ENCODE measurements at regions of chr6 and their contacts with region 1.

Region 1: DNA sequence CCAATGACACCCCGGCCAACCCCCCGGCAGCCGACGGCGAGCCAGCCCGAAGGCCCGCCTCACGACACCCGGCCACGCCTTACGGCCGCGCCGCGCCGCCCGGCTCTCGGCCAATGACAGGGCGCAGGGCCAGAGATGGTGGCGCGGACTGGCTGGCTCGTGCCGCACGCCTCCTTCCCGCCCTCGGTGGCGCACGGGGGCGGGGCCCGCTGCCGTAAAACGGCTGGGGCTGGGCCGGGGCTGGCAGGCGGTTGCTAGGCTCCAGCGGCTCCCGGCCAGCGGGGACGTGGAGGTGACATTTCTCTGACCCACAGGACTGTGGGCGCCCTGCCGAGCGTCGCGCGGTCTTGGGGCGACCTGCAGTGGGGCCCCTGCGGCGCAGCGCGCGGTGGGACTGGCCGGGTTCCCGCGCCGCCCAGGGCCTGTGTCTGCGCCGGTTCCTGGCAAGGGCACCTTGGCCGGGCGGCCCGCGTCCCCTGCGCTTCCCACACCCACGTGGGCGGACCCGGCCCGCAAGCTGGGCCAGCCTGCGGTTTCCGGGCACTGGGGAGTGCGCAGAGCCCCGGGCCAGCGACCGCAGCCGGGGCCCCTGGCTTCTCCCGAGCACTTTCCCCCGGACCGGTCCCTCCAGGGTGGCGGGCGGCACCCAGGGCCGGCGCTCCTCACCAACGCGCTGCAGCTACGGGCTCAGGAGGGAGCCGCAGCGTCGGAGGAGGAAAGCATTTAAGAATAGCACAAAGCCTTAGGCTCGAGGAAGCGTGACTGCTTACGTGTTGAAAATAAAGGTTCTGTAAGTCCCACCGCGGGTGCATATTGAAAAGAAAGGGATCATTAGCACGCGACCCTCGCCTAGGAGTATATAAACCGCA is at the start of gene MPC1:
- DNase-seq: peak; percentile 93 to 95 (median 94)
- H3K4me3 ChIP-seq: peak within 1 kb of the TSS; percentile 63 to 75
- H3K4me3 Mint-ChIP-seq: peak within 1 kb of the TSS; percentile 89 to 96 (median 93)
- H3K27ac ChIP-seq: peak within 1 kb of the TSS; percentile 77
- H3K27ac Mint-ChIP-seq: peak within 1 kb of the TSS; percentile 92 to 97 (median 93)
- H3K4me1 ChIP-seq: peaks cover 6% of the 10 kb centered on the region
- H3K4me1 Mint-ChIP-seq: peaks cover 5 to 22% (median 7%) of the 10 kb centered on the region in 4 donors
- H3K27me3 ChIP-seq: no peaks in the 10 kb centered on the region
- H3K27me3 Mint-ChIP-seq: no peaks in the 10 kb centered on the region
- total RNA-seq, gene MPC1: 33.1 to 34.7 TPM

Region 2: DNA sequence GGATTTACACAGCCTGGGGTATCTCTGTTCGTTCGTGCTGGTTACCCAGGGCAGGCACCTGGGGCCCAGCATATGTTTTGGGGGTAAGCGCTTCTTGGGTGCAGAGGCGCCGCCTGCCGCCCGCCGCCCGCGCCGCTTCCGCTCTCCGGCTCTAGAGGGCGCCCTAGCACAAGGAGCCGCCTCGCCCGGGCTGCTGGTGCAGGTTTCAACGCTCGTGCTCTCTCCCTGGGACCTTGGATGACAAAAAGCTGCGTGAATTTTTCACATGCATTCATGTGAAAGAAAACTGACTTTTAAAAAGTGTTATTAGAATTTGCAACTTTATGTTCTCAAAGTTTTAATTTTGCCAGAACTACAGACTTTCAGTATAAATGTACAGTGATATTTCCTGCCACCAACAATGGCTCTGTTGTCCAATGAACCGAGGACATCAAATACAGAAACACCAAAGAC is 107.4 kb before region 1 on chr6:
- CTCF ChIA-PET with region 1: interaction called, 7 read pairs
- POLR2A ChIA-PET with region 1: no interaction called
- intact Hi-C with region 1: loop called (anchors 1 kb)
- DNase-seq: peak; percentile 57 to 84 (median 77)
- H3K4me3 ChIP-seq: no peak overlapping the region
- H3K4me3 Mint-ChIP-seq: no peak overlapping the region
- H3K27ac ChIP-seq: no peak overlapping the region
- H3K27ac Mint-ChIP-seq: peak overlapping the region in 1 of 7 donors; percentile 66
- H3K4me1 ChIP-seq: peaks cover 4% of the 10 kb centered on the region
- H3K4me1 Mint-ChIP-seq: peaks cover 0 to 8% (median 6%) of the 10 kb centered on the region in 4 donors
- H3K27me3 ChIP-seq: no peaks in the 10 kb centered on the region
- H3K27me3 Mint-ChIP-seq: peaks cover 0 to 3% of the 10 kb centered on the region in 2 donors

Region 3: GRCh38 chr6:166335378-166336302 is 47.5 kb before region 1 on chr6:
- CTCF ChIA-PET with region 1: interaction called, 13 read pairs
- POLR2A ChIA-PET with region 1: interaction called, 3 read pairs
- intact Hi-C with region 1: no loop called
- DNase-seq: no peak
- H3K4me3 ChIP-seq: no peak overlapping the region
- H3K4me3 Mint-ChIP-seq: peak overlapping the region in 3 of 8 donors; percentile 17 to 68 (median 18)
- H3K27ac ChIP-seq: no peak overlapping the region
- H3K27ac Mint-ChIP-seq: peak overlapping the region in 4 of 7 donors; percentile 11 to 53 (median 36)
- H3K4me1 ChIP-seq: peaks cover 93% of the 10 kb centered on the region
- H3K4me1 Mint-ChIP-seq: peaks cover 0 to 48% (median 41%) of the 10 kb centered on the region in 4 donors
- H3K27me3 ChIP-seq: no peaks in the 10 kb centered on the region
- H3K27me3 Mint-ChIP-seq: no peaks in the 10 kb centered on the region

Region 4: GRCh38 chr6:166419286-166419685 is 36.1 kb after region 1 on chr6:
- CTCF ChIA-PET with region 1: interaction called, 6 read pairs
- POLR2A ChIA-PET with region 1: interaction called, 9 read pairs
- intact Hi-C with region 1: loop called (anchors 1 kb)
- DNase-seq: peak; percentile 45 to 82 (median 53)
- H3K4me3 ChIP-seq: no peak overlapping the region
- H3K4me3 Mint-ChIP-seq: peak overlapping the region in 7 of 8 donors; percentile 55 to 79 (median 70)
- H3K27ac ChIP-seq: peak overlapping the region; percentile 42
- H3K27ac Mint-ChIP-seq: peak overlapping the region; percentile 96 to 99 (median 98)
- H3K4me1 ChIP-seq: peaks cover 74% of the 10 kb centered on the region
- H3K4me1 Mint-ChIP-seq: peaks cover 55 to 74% (median 68%) of the 10 kb centered on the region in 4 donors
- H3K27me3 ChIP-seq: no peaks in the 10 kb centered on the region
- H3K27me3 Mint-ChIP-seq: peaks cover 0 to 4% of the 10 kb centered on the region in 2 donors

Region 5: GRCh38 chr6:166512567-166512966 is 129.4 kb after region 1 on chr6:
- CTCF ChIA-PET with region 1: interaction called, 3 read pairs
- POLR2A ChIA-PET with region 1: no interaction called
- intact Hi-C with region 1: loop called (anchors 1 kb)
- DNase-seq: peak; percentile 25 to 52 (median 47)
- H3K4me3 ChIP-seq: no peak overlapping the region
- H3K4me3 Mint-ChIP-seq: peak overlapping the region in 1 of 8 donors; percentile 47
- H3K27ac ChIP-seq: no peak overlapping the region
- H3K27ac Mint-ChIP-seq: peak overlapping the region in 5 of 7 donors; percentile 8 to 74 (median 25)
- H3K4me1 ChIP-seq: peaks cover 8% of the 10 kb centered on the region
- H3K4me1 Mint-ChIP-seq: peaks cover 7 to 13% (median 8%) of the 10 kb centered on the region in 4 donors
- H3K27me3 ChIP-seq: no peaks in the 10 kb centered on the region
- H3K27me3 Mint-ChIP-seq: no peaks in the 10 kb centered on the region